Ascending aorta (tissue), 2 donors: ENCODE measurements at regions of chr4 and their contacts with region 1.

Region 1: DNA sequence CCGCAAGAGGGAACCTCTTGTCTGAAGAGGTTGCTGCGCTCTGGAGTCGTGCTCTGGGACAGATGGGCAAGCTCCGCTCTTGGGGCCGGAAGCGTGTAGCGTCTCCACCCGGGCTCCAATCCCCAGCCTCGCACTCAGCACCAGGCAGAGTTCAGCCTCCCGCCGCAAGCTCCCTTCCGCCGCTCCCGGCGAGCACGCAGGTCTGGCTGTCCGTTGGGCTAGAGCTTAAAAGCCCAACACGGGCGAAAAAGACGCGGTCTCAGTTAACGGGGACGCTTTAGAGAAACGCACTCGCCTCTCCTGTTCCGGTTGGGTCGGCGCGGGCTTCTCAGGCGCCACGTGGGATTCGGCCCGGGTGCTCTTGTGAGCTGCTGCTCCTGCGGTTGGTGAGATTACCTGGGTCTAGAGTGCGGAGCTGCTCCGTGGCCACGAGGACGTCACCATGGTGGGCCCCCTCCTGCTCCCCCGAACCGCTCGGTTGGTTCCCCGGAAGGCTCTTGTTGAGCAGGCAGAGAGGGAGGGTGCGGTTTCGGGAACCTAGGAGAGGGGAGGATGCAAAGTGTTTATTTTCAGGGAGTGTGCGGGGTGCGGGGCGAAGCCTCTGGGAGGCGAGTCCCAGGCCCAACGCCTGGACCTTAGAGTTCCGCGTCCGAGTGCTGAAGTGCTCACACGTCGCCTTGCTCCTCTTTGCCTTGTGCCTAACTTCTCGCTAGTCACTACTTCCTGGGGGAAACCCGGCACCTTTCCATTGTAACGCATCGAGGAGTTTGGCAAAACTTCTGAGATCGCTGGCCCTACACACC is at the start of gene TMA16:
- DNase-seq: peak; percentile 37 to 92
- H3K4me3 ChIP-seq: peak within 1 kb of the TSS; percentile 83 to 90
- H3K27ac ChIP-seq: peak within 1 kb of the TSS; percentile 75 to 88
- H3K4me1 ChIP-seq: peaks cover 2 to 9% of the 10 kb centered on the region in 2 donors
- H3K27me3 ChIP-seq: no peaks in the 10 kb centered on the region
- CTCF ChIP-seq: no peak
- total RNA-seq, gene TMA16: 36.9 TPM

Region 2: GRCh38 chr4:163344147-163345125 is 150.1 kb before region 1 on chr4:
- intact Hi-C with region 1: loop called (anchors 2 kb)
- DNase-seq: no peak
- H3K4me3 ChIP-seq: peak overlapping the region; percentile 77 to 95
- H3K27ac ChIP-seq: peak overlapping the region; percentile 71 to 85
- H3K4me1 ChIP-seq: peaks cover 0 to 3% of the 10 kb centered on the region in 2 donors
- H3K27me3 ChIP-seq: no peaks in the 10 kb centered on the region
- CTCF ChIP-seq: no peak

Region 3: DNA sequence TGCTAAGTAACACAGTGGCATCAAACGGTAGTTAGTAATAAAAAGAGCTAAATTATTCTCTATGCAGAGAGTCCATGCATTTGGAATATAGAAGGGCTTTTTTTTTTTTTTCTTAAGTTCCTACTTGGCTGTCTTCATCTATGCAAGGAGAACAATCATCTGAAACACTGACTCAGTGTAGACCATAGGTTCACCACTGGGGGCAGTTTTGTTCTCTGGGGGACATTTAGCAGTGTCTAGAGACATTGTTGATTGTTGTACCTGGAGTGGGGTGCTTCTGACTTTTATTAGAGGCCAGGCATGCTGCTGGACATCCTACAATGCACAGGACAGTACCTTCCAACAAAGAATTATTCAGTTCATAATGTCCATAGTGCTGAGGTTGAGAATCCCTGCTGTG is 41.1 kb after region 1 on chr4:
- intact Hi-C with region 1: no loop called
- DNase-seq: no peak
- H3K4me3 ChIP-seq: no peak overlapping the region
- H3K27ac ChIP-seq: no peak overlapping the region
- H3K4me1 ChIP-seq: no peaks in the 10 kb centered on the region
- H3K27me3 ChIP-seq: no peaks in the 10 kb centered on the region
- CTCF ChIP-seq: no peak